Activated T-helper 1 cell treated with anti-CD3 and anti-CD28 coated beads, Interleukin-12 subunit alpha, Interleukin-12 subunit beta, Interleukin-2, Interleukin-4 antibody, amounts not matched to agents 30 ng/mL and 10 ng/mL and 1 ng/mL, durations not matched to agents 14 hours and 24 hours and 36 hours (primary cell): ENCODE measurements at regions of chr2 and their contacts with region 1.

Region 1: GRCh38 chr2:99818842-99819241 is 323.5 kb downstream of the AFF3 start:
- DNase-seq: no peak
- H3K4me3 Mint-ChIP-seq: no peak overlapping the region
- H3K27ac Mint-ChIP-seq: no peak overlapping the region
- H3K4me1 Mint-ChIP-seq: no peaks in the 10 kb centered on the region
- H3K27me3 Mint-ChIP-seq: peaks cover 4% of the 10 kb centered on the region

Region 2: GRCh38 chr2:100242891-100243619 is 424.2 kb after region 1 on chr2:
- intact Hi-C with region 1: loop called (anchors 1 kb)
- DNase-seq: no peak
- H3K4me3 Mint-ChIP-seq: no peak overlapping the region
- H3K27ac Mint-ChIP-seq: no peak overlapping the region
- H3K4me1 Mint-ChIP-seq: no peaks in the 10 kb centered on the region
- H3K27me3 Mint-ChIP-seq: peaks cover 4% of the 10 kb centered on the region